IMR-90 (cell line): ENCODE measurements at regions of chr7 and their contacts with region 1.

Region 1: GRCh38 chr7:55086413-55087201 is 67.8 kb downstream of the EGFR start:
- DNase-seq: peak; percentile 90
- ATAC-seq: peak; percentile 79
- H3K4me3 ChIP-seq: peak overlapping the region; percentile 41
- H3K27ac ChIP-seq: peak overlapping the region; percentile 99
- H3K4me1 ChIP-seq: peaks cover 40% of the 10 kb centered on the region
- H3K27me3 ChIP-seq: no peaks in the 10 kb centered on the region
- CTCF ChIP-seq: peak; percentile 4; the same call in 1 of the 2 replicates
- POLR2A ChIP-seq: no peak
- RAD21 ChIP-seq: 0 out of 2 replicates have a peak, but pooled peaks have one; percentile 7

Region 2: GRCh38 chr7:55075464-55076021 is 11.1 kb before region 1 on chr7:
- CTCF ChIA-PET with region 1: interaction called, 3 read pairs
- POLR2A ChIA-PET with region 1: interaction called, 15 read pairs
- dilution Hi-C with region 1: no loop called
- in situ Hi-C with region 1: no loop called
- intact Hi-C with region 1: no loop called
- DNase-seq: no peak
- ATAC-seq: no peak
- H3K4me3 ChIP-seq: no peak overlapping the region
- H3K27ac ChIP-seq: no peak overlapping the region
- H3K4me1 ChIP-seq: peaks cover 25% of the 10 kb centered on the region
- H3K27me3 ChIP-seq: no peaks in the 10 kb centered on the region
- CTCF ChIP-seq: no peak
- POLR2A ChIP-seq: no peak
- RAD21 ChIP-seq: no peak